Ascending aorta (tissue), 2 donors: ENCODE measurements at regions of chrX and their contacts with region 1.

Region 1: GRCh38 chrX:1453951-1454785 is 1.5 kb upstream of the ASMTL start:
- DNase-seq: peak; percentile 46 to 91
- H3K4me3 ChIP-seq: peak overlapping the region; percentile 89
- H3K27ac ChIP-seq: peak overlapping the region; percentile 37 to 95
- H3K4me1 ChIP-seq: peaks cover 12 to 13% of the 10 kb centered on the region in 2 donors
- H3K27me3 ChIP-seq: no peaks in the 10 kb centered on the region
- CTCF ChIP-seq: peak; percentile 93 to 98 (median 98)

Region 2: DNA sequence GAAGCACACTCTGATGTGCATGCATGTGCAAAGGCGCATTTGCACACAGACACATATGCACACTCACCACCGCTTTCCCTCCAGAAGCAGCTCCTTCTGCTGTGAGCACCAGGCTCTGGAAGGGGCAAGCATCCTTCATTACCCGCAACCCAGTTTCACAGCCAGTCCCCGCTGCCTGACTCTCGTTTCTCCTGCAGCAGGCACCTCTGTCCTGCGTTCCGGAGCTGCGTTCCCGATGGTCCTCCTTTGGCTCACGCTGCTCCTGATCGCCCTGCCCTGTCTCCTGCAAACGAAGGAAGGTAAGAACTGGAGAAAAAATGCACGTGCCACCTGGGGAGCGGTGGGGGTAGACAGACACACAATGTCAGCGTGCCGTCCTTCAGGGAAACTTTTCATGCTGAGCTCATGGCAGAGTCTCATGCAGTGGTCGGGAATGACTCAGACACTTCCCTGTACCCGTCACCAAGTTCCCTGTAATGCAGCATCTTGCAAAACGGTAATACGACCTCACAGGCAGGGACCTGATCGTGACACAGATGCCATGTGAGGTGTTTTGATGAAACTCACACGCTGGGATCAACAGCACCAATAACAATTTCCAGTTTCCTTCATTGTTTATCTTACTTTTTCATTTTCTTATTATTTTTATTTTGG is 112.5 kb before region 1 on chrX:
- intact Hi-C with region 1: no loop called
- DNase-seq: no peak
- H3K4me3 ChIP-seq: no peak overlapping the region
- H3K27ac ChIP-seq: no peak overlapping the region
- H3K4me1 ChIP-seq: no peaks in the 10 kb centered on the region
- H3K27me3 ChIP-seq: no peaks in the 10 kb centered on the region
- CTCF ChIP-seq: no peak

Region 3: DNA sequence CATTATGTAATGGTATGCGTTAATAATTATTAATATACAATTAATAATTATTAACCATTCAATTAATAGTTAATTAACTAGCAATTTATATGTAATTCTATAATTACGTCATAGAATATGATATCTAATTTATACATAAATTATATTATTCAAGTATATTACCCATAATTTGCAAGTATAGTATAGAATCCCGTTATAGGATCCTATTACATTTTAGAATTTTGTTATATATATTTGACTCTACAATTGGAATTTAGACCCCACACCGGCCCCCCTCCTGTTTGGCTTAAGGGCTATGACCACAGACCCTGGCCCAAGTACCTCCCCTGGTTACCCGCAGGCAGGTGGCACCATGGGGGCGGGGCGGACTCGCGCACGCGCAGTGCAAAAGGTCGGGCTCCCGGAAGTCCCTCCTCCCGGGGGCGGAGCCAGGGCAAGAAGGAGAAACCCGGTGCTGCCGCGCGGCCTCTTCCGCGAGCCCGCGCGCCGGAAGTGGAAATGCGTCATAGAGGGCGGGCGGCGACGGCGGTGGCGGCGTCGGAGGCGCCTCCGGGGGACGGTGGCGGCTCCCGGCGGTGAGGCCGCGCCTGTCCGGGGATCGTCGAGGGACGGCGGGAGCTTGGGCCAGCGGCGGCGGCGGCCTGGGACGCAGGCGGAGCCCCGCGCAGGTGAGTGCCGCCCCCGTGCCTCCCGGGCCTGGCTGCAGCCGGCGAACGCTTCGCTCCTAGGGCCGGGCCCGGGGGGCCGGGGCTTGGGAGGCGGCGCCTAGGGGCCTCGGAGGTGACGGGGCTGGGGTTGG is 137.1 kb after region 1 on chrX and contains the start of gene AKAP17A:
- intact Hi-C with region 1: loop called (anchors 1 kb)
- DNase-seq: peak; percentile 80 to 97
- H3K4me3 ChIP-seq: peak within 1 kb of the TSS; percentile 97 to 98
- H3K27ac ChIP-seq: peak within 1 kb of the TSS; percentile 82 to 87
- H3K4me1 ChIP-seq: peaks cover 0 to 9% of the 10 kb centered on the region in 2 donors
- H3K27me3 ChIP-seq: no peaks in the 10 kb centered on the region
- CTCF ChIP-seq: no peak
- total RNA-seq, gene AKAP17A: 74.0 TPM

Region 4: DNA sequence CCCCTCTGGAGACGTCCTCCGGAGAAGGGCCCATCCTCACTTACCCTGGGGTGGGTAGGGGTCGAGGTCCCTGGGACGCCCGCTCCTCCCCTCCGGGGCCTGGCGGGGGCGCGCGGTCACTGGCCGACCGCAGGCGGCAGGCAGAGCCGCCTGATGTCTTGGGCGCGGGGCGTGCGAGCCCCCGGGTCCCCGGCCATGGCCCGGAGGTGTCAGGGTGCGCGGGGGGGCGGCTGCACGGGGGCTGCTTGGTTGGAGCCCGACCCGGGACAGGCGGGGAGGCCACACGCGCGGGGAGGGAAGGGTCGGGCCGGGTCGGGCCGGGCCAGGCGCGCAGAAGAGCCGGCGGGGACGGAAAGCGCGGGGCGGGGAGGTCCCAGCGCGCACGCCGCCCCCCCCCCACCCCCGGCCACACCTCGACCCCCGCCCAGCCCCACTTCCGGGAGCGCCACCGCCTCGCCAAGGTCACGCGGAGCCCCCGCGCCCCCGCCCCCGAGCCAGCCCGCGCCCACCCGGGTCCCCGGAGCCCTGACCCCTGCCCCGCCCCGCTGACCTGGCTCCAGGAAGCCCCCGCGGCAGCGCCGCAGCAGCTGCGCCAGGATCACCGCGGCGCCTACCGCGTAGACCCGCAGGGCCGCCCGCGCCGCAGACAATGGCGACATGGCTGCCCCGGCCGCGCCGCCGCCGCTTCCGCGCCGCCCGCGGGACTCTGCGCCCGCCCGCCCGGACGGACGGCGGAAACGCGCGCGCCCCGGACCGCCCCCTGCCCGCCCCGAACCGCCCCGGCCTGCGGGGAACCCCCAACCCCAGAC is 1046.3 kb after region 1 on chrX and contains the starts of genes DHRSX and ZBED1:
- intact Hi-C with region 1: loop called (anchors 5 kb)
- DNase-seq: no peak
- H3K4me3 ChIP-seq: peak within 1 kb of the TSS; percentile 84 to 99
- H3K27ac ChIP-seq: peak within 1 kb of the TSS; percentile 77 to 91
- H3K4me1 ChIP-seq: peaks cover 7 to 24% of the 10 kb centered on the region in 2 donors
- H3K27me3 ChIP-seq: no peaks in the 10 kb centered on the region
- CTCF ChIP-seq: no peak
- total RNA-seq, gene DHRSX: 13.4 TPM
- total RNA-seq, gene ZBED1: 34.6 TPM

Region 5: GRCh38 chrX:2819345-2820135 is 1365.4 kb after region 1 on chrX:
- intact Hi-C with region 1: loop called (anchors 10 kb)
- DNase-seq: no peak
- H3K4me3 ChIP-seq: no peak overlapping the region
- H3K27ac ChIP-seq: no peak overlapping the region
- H3K4me1 ChIP-seq: no peaks in the 10 kb centered on the region
- H3K27me3 ChIP-seq: no peaks in the 10 kb centered on the region
- CTCF ChIP-seq: peak in 2 of 3 experiments; percentile 22 to 50